ENCODE measurements at regions of chr22 and their contacts with region 1.

Region 1: DNA sequence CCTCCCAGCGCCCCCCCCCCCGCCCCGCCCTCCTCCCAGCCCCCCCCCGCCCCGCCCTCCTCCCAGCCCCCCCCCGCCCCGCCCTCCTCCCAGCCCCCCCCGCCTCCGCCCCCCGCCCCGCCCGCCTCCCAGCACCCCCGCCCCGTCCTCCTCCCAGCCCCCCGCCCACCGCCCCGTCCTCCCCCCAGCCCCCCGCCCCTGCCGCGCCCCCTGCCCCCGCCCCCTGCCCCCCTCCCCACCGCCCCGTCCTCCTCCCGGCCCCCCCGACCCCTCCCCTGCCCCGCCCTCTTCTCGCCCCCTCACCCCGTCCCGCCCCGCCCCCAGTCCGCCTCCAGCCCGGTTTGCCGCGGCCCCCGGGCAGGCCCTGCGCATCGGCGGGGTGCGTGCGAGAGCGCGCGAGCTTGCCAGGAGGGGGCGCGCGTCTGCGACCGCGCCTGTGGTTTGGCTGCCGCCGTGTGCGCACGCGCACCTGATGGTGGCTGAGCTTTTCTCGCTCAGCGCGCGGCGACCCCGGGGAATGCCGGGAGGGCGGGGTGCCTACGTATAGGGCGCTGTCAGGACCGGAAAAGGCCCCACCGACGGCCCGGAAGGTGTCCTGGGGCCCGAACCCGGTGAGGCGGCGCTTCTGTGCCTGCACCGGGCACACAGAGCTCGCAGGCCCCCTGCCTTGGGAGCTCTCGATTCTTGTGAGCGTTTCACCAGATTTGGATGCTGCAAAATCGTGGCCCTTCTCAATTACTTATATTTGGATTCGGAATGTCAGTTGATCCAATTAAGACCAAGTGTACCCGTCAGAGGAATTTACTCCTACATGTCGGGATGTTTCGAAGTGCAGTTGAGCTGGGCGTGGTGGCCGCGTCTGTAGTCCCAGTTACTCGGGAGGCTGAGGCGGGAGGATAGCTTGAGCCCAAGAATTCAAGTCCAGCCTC is 501 bp upstream of the TTLL12 start:
- DNase-seq: peak; percentile 96 to 99 (median 97)
- ATAC-seq: peak; percentile 92 to 95 (median 94)
- H3K4me3 ChIP-seq: peak overlapping the region in 11 of 12 donors; percentile 45 to 95 (median 59)
- H3K27ac ChIP-seq: peak overlapping the region; percentile 74 to 98 (median 91)
- H3K4me1 ChIP-seq: peaks cover 0 to 36% (median 13%) of the 10 kb centered on the region in 12 donors
- H3K27me3 ChIP-seq: no peaks in the 10 kb centered on the region
- CTCF ChIP-seq: peak; percentile 63 to 91 (median 80)
- POLR2A ChIP-seq: peak in 1 of 2 donors; percentile 74

Region 2: GRCh38 chr22:43222262-43222661 is 34.8 kb after region 1 on chr22:
- intact Hi-C with region 1: loop called in 3 of 10 experiments (anchors 1 to 5 kb)
- DNase-seq: peak; percentile 69 to 85 (median 78)
- ATAC-seq: peak; percentile 77 to 93 (median 86)
- H3K4me3 ChIP-seq: no peak overlapping the region
- H3K27ac ChIP-seq: peak overlapping the region in 5 of 12 donors; percentile 9 to 75 (median 35)
- H3K4me1 ChIP-seq: peaks cover 0 to 19% (median 14%) of the 10 kb centered on the region in 12 donors
- H3K27me3 ChIP-seq: peaks cover 0 to 10% (median 0%) of the 10 kb centered on the region in 9 donors
- CTCF ChIP-seq: no peak
- POLR2A ChIP-seq: no peak